ENCODE measurements at regions of chr1 and their contacts with region 1.

Region 1: GRCh38 chr1:150578965-150579798 is at the start of gene MCL1:
- DNase-seq: peak; percentile 87 to 97 (median 91)
- ATAC-seq: peak; percentile 92
- H3K4me3 ChIP-seq: peak within 1 kb of the TSS; percentile 98
- H3K27ac ChIP-seq: peak within 1 kb of the TSS; percentile 87
- H3K4me1 ChIP-seq: peaks cover 10 to 19% of the 10 kb centered on the region in 2 experiments; a peak in 4 of 5 replicates
- H3K27me3 ChIP-seq: no peaks in the 10 kb centered on the region
- CTCF ChIP-seq: peak in 2 of 3 experiments; percentile 17 to 31; a peak in 3 of 6 replicates
- EP300 ChIP-seq: peak; percentile 69; the same call in 1 of the 2 replicates
- POLR2A ChIP-seq: peak; percentile 99
- RAD21 ChIP-seq: no peak
- polyA plus RNA-seq, gene MCL1: 27.1 to 31.0 TPM

Region 2: DNA sequence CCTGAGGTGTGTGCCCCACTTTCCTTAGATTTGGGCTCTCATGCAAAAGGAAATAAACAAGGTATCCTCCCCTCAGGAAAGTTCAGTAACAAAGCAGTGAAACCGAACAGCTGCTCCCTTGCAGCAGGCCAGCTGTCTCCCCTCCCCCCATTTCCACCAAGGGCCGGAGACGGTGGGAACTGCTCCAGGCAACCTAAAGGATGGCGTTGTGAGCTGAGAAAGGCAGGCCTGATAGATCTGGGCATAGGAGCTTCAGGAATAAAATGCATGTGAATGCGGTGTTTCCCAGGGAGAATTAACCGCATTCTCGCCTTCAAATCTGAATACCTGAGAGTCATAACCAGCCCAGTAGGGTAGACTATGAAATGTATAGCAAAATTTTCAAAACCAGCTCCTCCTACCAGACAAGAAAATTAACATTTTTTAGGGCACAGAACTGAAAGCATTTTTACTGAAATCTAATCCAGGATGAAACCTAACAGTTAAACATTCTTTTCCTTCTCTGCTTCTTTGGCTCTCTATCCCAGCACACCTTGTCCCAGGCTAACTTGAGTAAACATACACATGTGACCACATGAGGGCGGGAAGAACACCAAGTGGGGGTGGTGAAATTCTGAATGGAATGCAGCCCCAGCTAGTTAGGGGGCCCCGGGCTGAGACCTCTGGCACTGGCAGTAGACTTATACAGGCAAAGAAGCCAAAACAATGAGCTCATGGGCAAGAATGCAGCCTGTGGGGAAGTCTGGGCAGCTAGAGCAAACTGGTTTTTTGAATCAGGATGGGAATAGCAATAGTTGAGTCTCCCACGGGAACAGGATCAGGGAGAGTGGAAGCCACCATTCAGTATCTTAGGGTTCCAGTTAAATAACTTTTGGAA is 11.2 kb before region 1 on chr1:
- CTCF ChIA-PET with region 1: no interaction called
- POLR2A ChIA-PET with region 1: interaction called, 148 read pairs
- in situ Hi-C with region 1: no loop called
- intact Hi-C with region 1: no loop called
- DNase-seq: peak; percentile 48 to 71 (median 58)
- ATAC-seq: peak; percentile 47
- H3K4me3 ChIP-seq: no peak overlapping the region
- H3K27ac ChIP-seq: peak overlapping the region; percentile 51
- H3K4me1 ChIP-seq: peaks cover 22 to 34% of the 10 kb centered on the region in 2 experiments
- H3K27me3 ChIP-seq: no peaks in the 10 kb centered on the region
- CTCF ChIP-seq: peak in 2 of 3 experiments; percentile 14 to 31; a peak in 2 of 6 replicates
- EP300 ChIP-seq: no peak
- POLR2A ChIP-seq: peak; percentile 35
- RAD21 ChIP-seq: no peak

Region 3: GRCh38 chr1:150606463-150607148 is 27.4 kb after region 1 on chr1:
- CTCF ChIA-PET with region 1: no interaction called
- POLR2A ChIA-PET with region 1: interaction called, 18 read pairs
- in situ Hi-C with region 1: no loop called
- intact Hi-C with region 1: no loop called
- DNase-seq: no peak
- ATAC-seq: no peak
- H3K4me3 ChIP-seq: no peak overlapping the region
- H3K27ac ChIP-seq: 0 out of 3 replicates have a peak overlapping the region, but pooled peaks have one; percentile 1
- H3K4me1 ChIP-seq: peaks cover 11 to 22% of the 10 kb centered on the region in 2 experiments
- H3K27me3 ChIP-seq: no peaks in the 10 kb centered on the region
- CTCF ChIP-seq: no peak
- EP300 ChIP-seq: no peak
- POLR2A ChIP-seq: no peak
- RAD21 ChIP-seq: no peak

Region 4: DNA sequence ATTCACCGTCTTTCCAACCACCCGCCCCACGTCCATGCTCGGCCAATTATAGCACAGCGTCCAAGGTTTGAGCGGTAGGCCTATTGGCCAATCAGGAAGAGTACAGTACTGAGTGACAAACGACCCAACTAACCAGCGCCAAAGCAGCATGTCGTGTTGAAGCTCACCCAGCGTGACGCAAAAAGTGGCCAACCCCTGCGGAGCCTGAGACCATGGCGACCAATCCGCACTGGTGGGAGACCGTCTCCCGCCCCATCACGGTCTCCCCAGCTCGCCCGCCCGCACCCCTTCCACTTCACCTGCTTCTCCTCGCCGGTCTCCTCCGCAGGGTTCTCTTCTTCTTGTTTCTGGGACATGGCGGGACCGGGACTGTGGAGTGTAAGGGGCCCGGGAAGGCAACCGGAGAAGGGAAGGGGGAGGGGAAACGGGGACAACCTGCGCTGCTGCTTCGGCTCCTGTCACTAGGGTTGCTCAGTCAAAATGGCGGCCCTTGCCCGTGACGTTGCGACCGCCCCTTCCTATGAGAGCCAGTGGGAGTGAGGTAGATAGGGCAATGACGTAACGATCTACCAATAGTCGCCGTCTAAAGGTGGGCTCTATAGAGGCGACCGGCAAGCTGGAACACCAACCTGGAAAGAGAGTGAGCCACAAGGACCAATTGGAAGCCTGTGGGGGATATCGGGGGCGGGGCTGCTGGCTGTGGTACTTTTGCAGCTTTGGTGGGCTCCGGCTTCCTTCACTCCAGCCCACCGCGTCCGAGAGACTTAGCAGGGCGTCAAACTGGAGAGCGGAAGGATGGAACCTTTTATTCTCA is 50.1 kb after region 1 on chr1 and contains the start of gene ENSA:
- CTCF ChIA-PET with region 1: no interaction called
- POLR2A ChIA-PET with region 1: interaction called, 16 read pairs
- in situ Hi-C with region 1: no loop called
- intact Hi-C with region 1: no loop called
- DNase-seq: peak; percentile 89 to 99 (median 94)
- ATAC-seq: peak; percentile 94
- H3K4me3 ChIP-seq: peak within 1 kb of the TSS; percentile 59
- H3K27ac ChIP-seq: peak within 1 kb of the TSS; percentile 92
- H3K4me1 ChIP-seq: peaks cover 14 to 24% of the 10 kb centered on the region in 2 experiments; a peak in 4 of 5 replicates
- H3K27me3 ChIP-seq: no peaks in the 10 kb centered on the region
- CTCF ChIP-seq: no peak
- EP300 ChIP-seq: peak; percentile 3; the same call in 1 of the 2 replicates
- POLR2A ChIP-seq: peak; percentile 97
- RAD21 ChIP-seq: no peak
- polyA plus RNA-seq, gene ENSA: 68.1 to 93.9 TPM

Region 5: DNA sequence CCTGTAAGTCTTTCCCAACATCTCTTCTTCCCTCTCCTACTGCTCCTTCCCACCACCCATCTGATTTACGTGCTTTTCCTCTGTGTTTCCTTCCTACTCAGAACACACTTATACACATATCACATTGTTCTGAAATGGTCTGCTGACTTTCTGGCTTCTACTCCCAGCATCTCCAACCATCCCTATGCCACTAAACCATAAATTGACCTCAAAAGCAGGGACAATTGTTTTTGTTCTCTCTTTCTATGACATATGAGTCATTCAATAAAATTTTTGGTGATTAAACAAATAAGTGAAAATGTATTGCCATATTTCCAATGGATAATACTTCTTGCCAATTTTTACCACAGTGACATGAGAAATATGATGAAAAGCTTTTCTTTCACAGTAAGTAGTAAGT is 109.6 kb after region 1 on chr1:
- CTCF ChIA-PET with region 1: no interaction called
- POLR2A ChIA-PET with region 1: no interaction called
- in situ Hi-C with region 1: no loop called
- intact Hi-C with region 1: no loop called
- DNase-seq: no peak
- ATAC-seq: no peak
- H3K4me3 ChIP-seq: no peak overlapping the region
- H3K27ac ChIP-seq: no peak overlapping the region
- H3K4me1 ChIP-seq: no peaks in the 10 kb centered on the region
- H3K27me3 ChIP-seq: no peaks in the 10 kb centered on the region
- CTCF ChIP-seq: no peak
- EP300 ChIP-seq: no peak
- POLR2A ChIP-seq: no peak
- RAD21 ChIP-seq: no peak

Region 6: DNA sequence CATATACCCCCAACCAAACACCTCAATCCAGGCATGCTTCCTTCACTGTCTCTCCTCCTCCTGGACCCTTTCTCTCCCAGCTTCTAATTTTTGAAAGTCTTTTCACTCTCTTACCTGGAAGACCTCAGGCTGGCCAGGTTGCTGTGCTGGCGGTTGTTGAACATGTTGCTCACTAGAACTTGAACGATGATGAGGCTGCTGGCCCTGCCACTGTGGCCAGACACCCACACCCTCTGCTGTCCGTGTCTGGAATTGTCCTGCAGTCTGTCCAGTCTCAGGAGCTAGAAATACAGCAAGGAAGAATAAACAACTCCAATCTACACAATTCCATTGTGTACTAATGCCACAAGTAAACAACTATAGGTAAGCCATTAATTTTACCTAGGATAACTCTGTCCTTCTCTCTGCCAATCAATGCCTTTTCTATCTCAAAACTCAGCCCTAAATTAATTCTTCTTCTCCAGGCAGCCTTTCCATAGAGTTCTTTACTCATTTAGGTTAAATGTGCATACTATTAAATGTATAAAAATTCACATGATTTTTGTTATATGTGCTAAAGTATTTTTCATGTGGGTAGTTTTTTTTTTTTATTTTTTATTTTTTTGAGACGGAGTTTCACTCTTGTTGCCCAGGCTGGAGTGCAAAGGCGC is 234.0 kb after region 1 on chr1:
- CTCF ChIA-PET with region 1: no interaction called
- POLR2A ChIA-PET with region 1: interaction called, 10 read pairs
- in situ Hi-C with region 1: no loop called
- intact Hi-C with region 1: loop called (anchors 5 kb)
- DNase-seq: peak; percentile 37 to 78 (median 57)
- ATAC-seq: peak; percentile 98
- H3K4me3 ChIP-seq: no peak overlapping the region
- H3K27ac ChIP-seq: no peak overlapping the region
- H3K4me1 ChIP-seq: peaks cover 0 to 8% of the 10 kb centered on the region in 2 experiments; a peak in 1 of 5 replicates
- H3K27me3 ChIP-seq: no peaks in the 10 kb centered on the region
- CTCF ChIP-seq: peak; percentile 86 to 92 (median 90)
- EP300 ChIP-seq: no peak
- POLR2A ChIP-seq: no peak
- RAD21 ChIP-seq: peak; percentile 85 to 95

Region 7: DNA sequence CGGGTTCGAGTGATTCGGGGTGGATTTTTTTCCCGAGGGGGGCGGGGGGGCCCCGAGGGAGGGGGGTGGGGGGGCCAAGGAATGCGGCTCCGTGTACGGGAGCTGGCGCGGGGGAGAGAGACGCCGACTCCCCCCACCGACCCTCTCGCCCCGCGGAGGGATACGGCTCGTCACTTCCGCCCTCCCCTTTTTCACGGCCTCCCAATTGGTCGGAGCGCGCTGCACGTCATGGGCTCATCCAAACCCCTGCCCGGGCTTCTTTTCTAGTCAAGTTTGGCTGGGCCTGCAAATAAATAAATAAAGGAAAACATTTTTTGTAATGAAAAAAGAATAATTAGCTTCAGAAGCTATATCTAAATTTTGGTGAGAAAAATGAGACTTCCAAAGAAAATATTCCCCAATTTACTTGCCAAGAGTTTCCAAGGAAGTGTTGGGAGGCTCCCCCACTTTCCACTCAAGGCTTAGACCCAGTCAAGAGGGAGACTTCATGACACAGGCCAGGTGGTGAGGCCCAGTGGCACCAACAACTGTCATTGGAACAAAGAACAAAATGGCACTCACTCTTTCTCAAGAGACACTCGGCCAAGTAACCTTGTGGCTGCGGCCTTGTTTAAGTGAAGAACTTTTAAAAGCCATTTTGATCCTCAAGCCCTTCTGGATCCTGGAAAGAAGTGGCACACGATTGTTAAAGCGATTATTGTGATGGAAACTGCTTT is 880.3 kb after region 1 on chr1 and contains the start of gene POGZ:
- CTCF ChIA-PET with region 1: no interaction called
- POLR2A ChIA-PET with region 1: no interaction called
- in situ Hi-C with region 1: no loop called
- intact Hi-C with region 1: no loop called
- DNase-seq: peak; percentile 89 to 96 (median 93)
- ATAC-seq: peak; percentile 88
- H3K4me3 ChIP-seq: peak within 1 kb of the TSS; percentile 59
- H3K27ac ChIP-seq: peak within 1 kb of the TSS; percentile 90
- H3K4me1 ChIP-seq: peaks cover 0 to 20% of the 10 kb centered on the region in 2 experiments; a peak in 4 of 5 replicates
- H3K27me3 ChIP-seq: no peaks in the 10 kb centered on the region
- CTCF ChIP-seq: no peak
- EP300 ChIP-seq: no peak
- POLR2A ChIP-seq: no peak; the same call in 1 of the 2 replicates
- RAD21 ChIP-seq: no peak
- polyA plus RNA-seq, gene POGZ: 9.4 to 13.7 TPM